HepG2 (cell line): ENCODE measurements at regions of chr10 and their contacts with region 1.

Region 1: DNA sequence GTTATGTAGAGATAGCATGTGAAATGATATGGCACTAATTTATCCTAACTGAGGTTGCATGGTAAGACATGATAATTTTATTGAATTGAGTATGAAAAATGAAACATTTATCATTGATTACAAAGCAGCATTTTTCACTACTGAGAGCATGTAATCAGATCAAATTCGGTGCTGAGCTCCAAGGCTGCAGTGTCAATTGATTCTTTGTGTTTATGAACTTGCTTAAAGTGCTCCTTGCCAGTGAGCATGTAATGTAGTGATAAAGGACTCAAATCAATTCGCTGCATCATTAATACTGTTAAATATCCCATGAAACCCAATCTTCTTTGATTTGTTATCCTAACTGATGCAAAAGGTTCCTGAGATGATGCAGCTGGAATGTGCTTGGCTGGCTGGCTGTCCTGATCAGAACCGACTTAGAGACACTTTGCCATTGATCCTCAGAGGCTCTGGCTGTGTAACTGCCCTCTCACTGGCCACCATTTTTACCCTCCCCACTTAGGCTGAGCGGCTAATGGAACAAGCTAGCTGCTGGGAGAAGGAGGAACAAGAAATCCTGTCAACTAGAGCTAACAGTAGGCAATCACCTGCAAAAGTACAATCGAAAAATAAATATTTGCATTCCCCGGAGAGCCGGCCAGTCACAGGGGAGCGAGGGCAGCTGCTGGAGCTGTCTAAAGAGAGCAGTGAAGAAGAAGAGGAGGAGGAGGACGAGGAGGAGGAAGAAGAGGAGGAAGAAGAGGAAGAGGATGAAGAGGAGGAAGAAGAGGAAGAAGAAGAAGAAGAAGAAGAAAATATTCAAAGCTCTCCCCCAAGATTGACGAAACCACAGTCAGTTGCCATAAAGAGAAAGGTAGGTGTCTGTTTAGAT is 89.8 kb upstream of the SAMD8 start:
- DNase-seq: peak; percentile 66
- ATAC-seq: peak; percentile 94
- H3K4me3 ChIP-seq: no peak overlapping the region; a peak in 1 of 6 replicates
- H3K27ac ChIP-seq: peak overlapping the region; percentile 11
- H3K4me1 ChIP-seq: peaks cover 21% of the 10 kb centered on the region
- H3K27me3 ChIP-seq: no peaks in the 10 kb centered on the region
- CTCF ChIP-seq: no peak
- EP300 ChIP-seq: no peak
- POLR2A ChIP-seq: no peak
- RAD21 ChIP-seq: no peak

Region 2: DNA sequence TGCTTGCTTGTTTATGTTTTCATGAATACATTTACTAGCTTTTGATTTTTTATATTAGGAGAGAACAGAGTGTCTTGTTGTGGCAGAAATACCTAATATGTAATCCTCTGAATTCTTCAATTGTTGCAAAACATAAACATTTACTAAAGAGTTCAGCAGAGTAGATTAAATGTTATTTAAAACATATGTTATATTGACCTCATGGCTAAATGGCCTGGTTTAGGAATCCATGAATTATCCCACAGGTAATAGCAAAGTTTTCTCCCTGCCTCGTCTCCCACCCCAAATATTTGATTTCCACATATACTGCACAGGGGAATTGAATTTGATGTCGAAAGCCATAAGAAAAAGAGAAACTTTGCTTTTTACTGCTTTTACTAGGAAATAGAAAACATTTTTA is 758.8 kb before region 1 on chr10:
- CTCF ChIA-PET with region 1: interaction called, 9 read pairs
- POLR2A ChIA-PET with region 1: no interaction called
- in situ Hi-C with region 1: no loop called
- intact Hi-C with region 1: loop called (anchors 1 kb)
- DNase-seq: no peak
- ATAC-seq: no peak
- H3K4me3 ChIP-seq: no peak overlapping the region
- H3K27ac ChIP-seq: no peak overlapping the region
- H3K4me1 ChIP-seq: peaks cover 5% of the 10 kb centered on the region; the same call in 1 of the 2 replicates
- H3K27me3 ChIP-seq: no peaks in the 10 kb centered on the region
- CTCF ChIP-seq: no peak
- EP300 ChIP-seq: no peak
- POLR2A ChIP-seq: no peak
- RAD21 ChIP-seq: no peak

Region 3: GRCh38 chr10:74826142-74827044 is 195.2 kb before region 1 on chr10 and contains the start of gene KAT6B:
- CTCF ChIA-PET with region 1: no interaction called
- POLR2A ChIA-PET with region 1: interaction called, 4 read pairs
- in situ Hi-C with region 1: no loop called
- intact Hi-C with region 1: loop called (anchors 2 kb)
- DNase-seq: peak; percentile 100
- ATAC-seq: peak; percentile 91
- H3K4me3 ChIP-seq: peak within 1 kb of the TSS; percentile 88 to 98 (median 90)
- H3K27ac ChIP-seq: peak within 1 kb of the TSS; percentile 98
- H3K4me1 ChIP-seq: peaks cover 50% of the 10 kb centered on the region
- H3K27me3 ChIP-seq: no peaks in the 10 kb centered on the region
- CTCF ChIP-seq: peak; percentile 26; the same call in 1 of the 2 replicates
- EP300 ChIP-seq: no peak
- POLR2A ChIP-seq: peak; percentile 59 to 78; a peak in 3 of 4 replicates
- RAD21 ChIP-seq: peak; percentile 54
- total RNA-seq, gene KAT6B: 7.8 and 9.5 TPM in 2 replicates

Region 4: DNA sequence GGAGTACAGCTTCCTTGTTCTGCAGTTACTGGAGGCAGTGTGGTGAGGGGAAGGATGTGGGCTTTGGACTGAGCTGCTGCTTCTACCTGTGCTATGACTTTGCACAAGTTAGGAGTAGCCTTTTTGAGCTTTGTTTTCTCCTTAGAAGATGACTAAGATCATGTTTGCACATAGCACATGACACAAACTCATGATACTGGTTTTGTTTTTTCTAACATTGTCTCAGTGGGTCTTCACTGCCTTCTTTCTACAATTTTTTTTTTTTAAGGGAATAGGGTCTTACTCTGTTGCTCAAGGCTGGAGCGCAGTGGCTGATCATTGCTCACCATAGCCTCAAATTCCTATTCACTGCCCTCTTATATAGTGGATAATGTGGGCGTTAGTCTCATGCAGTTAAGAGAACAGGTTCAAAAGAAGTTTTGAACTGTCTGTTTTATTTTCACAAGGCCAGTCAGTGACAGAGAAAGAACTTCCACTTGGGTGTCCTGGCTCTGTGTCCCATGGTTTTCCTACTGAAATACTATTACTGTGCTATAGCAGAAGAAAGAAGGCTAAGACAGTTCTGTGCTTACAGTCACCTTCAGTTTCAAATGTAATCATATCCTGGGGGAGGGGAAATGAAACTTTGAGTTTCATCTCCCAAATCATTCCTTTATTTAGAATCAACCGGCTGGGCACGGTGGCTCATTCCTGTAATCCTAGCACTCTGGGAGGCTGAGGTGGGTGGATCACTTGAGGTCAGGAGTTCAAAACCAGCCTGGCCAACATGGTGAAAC is 123.2 kb before region 1 on chr10:
- CTCF ChIA-PET with region 1: no interaction called
- POLR2A ChIA-PET with region 1: no interaction called
- in situ Hi-C with region 1: no loop called
- intact Hi-C with region 1: loop called (anchors 5 kb)
- DNase-seq: peak; percentile 28
- ATAC-seq: peak; percentile 85
- H3K4me3 ChIP-seq: no peak overlapping the region
- H3K27ac ChIP-seq: peak overlapping the region; percentile 45
- H3K4me1 ChIP-seq: peaks cover 15% of the 10 kb centered on the region
- H3K27me3 ChIP-seq: no peaks in the 10 kb centered on the region
- CTCF ChIP-seq: no peak
- EP300 ChIP-seq: no peak
- POLR2A ChIP-seq: no peak
- RAD21 ChIP-seq: no peak

Region 5: DNA sequence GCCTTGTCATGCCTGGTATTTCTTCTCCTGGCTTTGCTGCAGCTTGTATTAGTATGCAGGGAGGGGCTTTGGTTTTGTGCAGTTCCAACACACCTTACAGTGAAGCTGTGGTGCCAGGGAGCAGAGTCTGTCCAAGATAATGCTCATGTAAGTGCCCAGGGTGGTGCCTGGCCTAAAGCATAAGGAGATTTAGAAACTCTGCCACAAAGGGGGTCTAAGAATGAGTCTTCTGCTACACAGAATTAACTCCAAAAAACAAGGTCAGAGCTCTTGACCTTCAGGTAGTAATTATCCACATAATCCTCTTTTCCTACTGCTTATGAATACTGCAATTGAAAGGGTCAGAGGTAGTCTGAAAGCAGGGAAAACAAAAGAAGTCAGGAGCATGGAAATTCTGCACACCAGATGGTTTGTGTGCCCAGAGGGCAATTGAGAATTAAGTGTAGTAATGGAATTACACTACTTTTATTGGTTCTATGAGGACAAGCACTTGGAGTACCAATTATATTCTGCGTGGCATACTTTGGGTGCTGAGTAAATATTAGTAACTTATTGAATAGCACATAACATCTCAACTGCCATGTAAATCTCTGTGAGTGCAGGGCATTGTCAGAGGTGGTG is 73.7 kb before region 1 on chr10:
- CTCF ChIA-PET with region 1: no interaction called
- POLR2A ChIA-PET with region 1: no interaction called
- in situ Hi-C with region 1: no loop called
- intact Hi-C with region 1: no loop called
- DNase-seq: no peak
- ATAC-seq: no peak
- H3K4me3 ChIP-seq: no peak overlapping the region
- H3K27ac ChIP-seq: no peak overlapping the region
- H3K4me1 ChIP-seq: peaks cover 31% of the 10 kb centered on the region
- H3K27me3 ChIP-seq: no peaks in the 10 kb centered on the region
- CTCF ChIP-seq: no peak
- EP300 ChIP-seq: no peak
- POLR2A ChIP-seq: no peak
- RAD21 ChIP-seq: no peak

Region 6: GRCh38 chr10:75632805-75633462 is 611.3 kb after region 1 on chr10:
- CTCF ChIA-PET with region 1: no interaction called
- POLR2A ChIA-PET with region 1: no interaction called
- in situ Hi-C with region 1: no loop called
- intact Hi-C with region 1: no loop called
- DNase-seq: no peak
- ATAC-seq: no peak
- H3K4me3 ChIP-seq: no peak overlapping the region
- H3K27ac ChIP-seq: no peak overlapping the region
- H3K4me1 ChIP-seq: peaks cover 55% of the 10 kb centered on the region
- H3K27me3 ChIP-seq: no peaks in the 10 kb centered on the region
- CTCF ChIP-seq: no peak
- EP300 ChIP-seq: no peak
- POLR2A ChIP-seq: no peak
- RAD21 ChIP-seq: no peak